K562 (cell line): ENCODE measurements at regions of chr9 and their contacts with region 1.

Region 1: GRCh38 chr9:122912964-122913673 is at the start of gene ZBTB6:
- DNase-seq: peak; percentile 60 to 86 (median 72)
- ATAC-seq: peak; percentile 98
- H3K4me3 ChIP-seq: peak within 1 kb of the TSS; percentile 73
- H3K27ac ChIP-seq: peak within 1 kb of the TSS; percentile 85
- H3K4me1 ChIP-seq: peaks cover 0 to 8% of the 10 kb centered on the region in 2 experiments; a peak in 1 of 5 replicates
- H3K27me3 ChIP-seq: no peaks in the 10 kb centered on the region
- CTCF ChIP-seq: peak in 1 of 3 experiments; percentile 14; a peak in 1 of 6 replicates
- EP300 ChIP-seq: peak; percentile 37; the same call in 1 of the 2 replicates
- POLR2A ChIP-seq: peak; percentile 87
- RAD21 ChIP-seq: no peak; a peak in 1 of 4 replicates
- polyA plus RNA-seq, gene ZBTB6: 1.4 to 4.8 TPM

Region 2: GRCh38 chr9:122923947-122924346 is 10.8 kb after region 1 on chr9:
- CTCF ChIA-PET with region 1: no interaction called
- POLR2A ChIA-PET with region 1: interaction called, 11 read pairs
- in situ Hi-C with region 1: no loop called
- intact Hi-C with region 1: no loop called
- DNase-seq: no peak
- ATAC-seq: peak; percentile 54
- H3K4me3 ChIP-seq: no peak overlapping the region
- H3K27ac ChIP-seq: no peak overlapping the region
- H3K4me1 ChIP-seq: no peaks in the 10 kb centered on the region
- H3K27me3 ChIP-seq: no peaks in the 10 kb centered on the region
- CTCF ChIP-seq: no peak
- EP300 ChIP-seq: no peak
- POLR2A ChIP-seq: no peak
- RAD21 ChIP-seq: no peak

Region 3: GRCh38 chr9:122931226-122932121 is 18.4 kb after region 1 on chr9 and contains the start of gene ZBTB26:
- CTCF ChIA-PET with region 1: no interaction called
- POLR2A ChIA-PET with region 1: interaction called, 11 read pairs
- in situ Hi-C with region 1: no loop called
- intact Hi-C with region 1: no loop called
- DNase-seq: peak; percentile 95 to 99 (median 98)
- ATAC-seq: peak; percentile 98
- H3K4me3 ChIP-seq: peak within 1 kb of the TSS; percentile 69
- H3K27ac ChIP-seq: peak within 1 kb of the TSS; percentile 75
- H3K4me1 ChIP-seq: peaks cover 7 to 9% of the 10 kb centered on the region in 2 experiments; a peak in 3 of 5 replicates
- H3K27me3 ChIP-seq: no peaks in the 10 kb centered on the region
- CTCF ChIP-seq: no peak
- EP300 ChIP-seq: 0 out of 2 replicates have a peak, but pooled peaks have one; percentile 8
- POLR2A ChIP-seq: peak; percentile 74
- RAD21 ChIP-seq: no peak
- polyA plus RNA-seq, gene ZBTB26: 2.4 to 5.0 TPM

Region 4: GRCh38 chr9:122991370-122991830 is 78.3 kb after region 1 on chr9:
- CTCF ChIA-PET with region 1: no interaction called
- POLR2A ChIA-PET with region 1: no interaction called
- in situ Hi-C with region 1: no loop called
- intact Hi-C with region 1: loop called (anchors 5 kb)
- DNase-seq: peak; percentile 34 to 60 (median 54)
- ATAC-seq: peak; percentile 79
- H3K4me3 ChIP-seq: no peak overlapping the region
- H3K27ac ChIP-seq: no peak overlapping the region
- H3K4me1 ChIP-seq: no peaks in the 10 kb centered on the region; a peak in 1 of 5 replicates
- H3K27me3 ChIP-seq: no peaks in the 10 kb centered on the region
- CTCF ChIP-seq: peak; percentile 31 to 80 (median 52); a peak in 5 of 6 replicates
- EP300 ChIP-seq: no peak
- POLR2A ChIP-seq: no peak
- RAD21 ChIP-seq: peak; percentile 57 to 76

Region 5: GRCh38 chr9:123191260-123192079 is 278.4 kb after region 1 on chr9:
- CTCF ChIA-PET with region 1: no interaction called
- POLR2A ChIA-PET with region 1: no interaction called
- in situ Hi-C with region 1: no loop called
- intact Hi-C with region 1: no loop called
- DNase-seq: peak in 1 of 4 experiments; percentile 13
- ATAC-seq: peak; percentile 66
- H3K4me3 ChIP-seq: no peak overlapping the region
- H3K27ac ChIP-seq: 0 out of 3 replicates have a peak overlapping the region, but pooled peaks have one; percentile 34
- H3K4me1 ChIP-seq: peaks cover 0 to 3% of the 10 kb centered on the region in 2 experiments; a peak in 2 of 5 replicates
- H3K27me3 ChIP-seq: no peaks in the 10 kb centered on the region
- CTCF ChIP-seq: no peak
- EP300 ChIP-seq: no peak
- POLR2A ChIP-seq: no peak
- RAD21 ChIP-seq: no peak